ENCODE measurements at regions of chrX and their contacts with region 1.

Region 1: GRCh38 chrX:39613482-39613921 is 484.3 kb downstream of the BCOR start:
- DNase-seq: peak; percentile 35
- H3K4me3 Mint-ChIP-seq: peak overlapping the region; percentile 78
- H3K27ac Mint-ChIP-seq: peak overlapping the region; percentile 95
- H3K4me1 Mint-ChIP-seq: peaks cover 29% of the 10 kb centered on the region
- H3K27me3 Mint-ChIP-seq: no peaks in the 10 kb centered on the region

Region 2: GRCh38 chrX:39491548-39492297 is 121.8 kb before region 1 on chrX:
- CTCF ChIA-PET with region 1: no interaction called
- POLR2A ChIA-PET with region 1: no interaction called
- intact Hi-C with region 1: loop called (anchors 5 kb)
- DNase-seq: peak; percentile 77
- H3K4me3 Mint-ChIP-seq: peak overlapping the region; percentile 34
- H3K27ac Mint-ChIP-seq: peak overlapping the region; percentile 83
- H3K4me1 Mint-ChIP-seq: peaks cover 50% of the 10 kb centered on the region
- H3K27me3 Mint-ChIP-seq: no peaks in the 10 kb centered on the region

Region 3: DNA sequence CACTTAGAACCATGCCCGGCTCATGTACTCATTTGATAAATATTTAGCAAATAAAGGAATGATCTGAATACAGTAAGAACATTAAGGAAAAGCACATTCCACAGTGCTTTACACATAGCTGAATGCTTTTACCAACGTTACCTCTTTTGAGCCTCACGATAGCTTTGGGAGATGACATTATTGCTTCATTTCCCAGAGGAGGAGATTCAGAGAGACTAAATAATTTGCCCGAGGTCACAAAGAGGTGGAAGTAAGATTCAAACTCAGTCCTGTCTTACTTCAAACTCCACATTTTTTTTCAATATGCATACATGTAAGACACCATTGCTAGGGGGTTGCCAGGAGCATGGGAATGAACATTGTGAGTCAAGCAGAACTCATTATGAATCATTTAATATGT is 54.3 kb before region 1 on chrX:
- CTCF ChIA-PET with region 1: no interaction called
- POLR2A ChIA-PET with region 1: no interaction called
- intact Hi-C with region 1: no loop called
- DNase-seq: no peak
- H3K4me3 Mint-ChIP-seq: no peak overlapping the region
- H3K27ac Mint-ChIP-seq: no peak overlapping the region
- H3K4me1 Mint-ChIP-seq: no peaks in the 10 kb centered on the region
- H3K27me3 Mint-ChIP-seq: no peaks in the 10 kb centered on the region

Region 4: DNA sequence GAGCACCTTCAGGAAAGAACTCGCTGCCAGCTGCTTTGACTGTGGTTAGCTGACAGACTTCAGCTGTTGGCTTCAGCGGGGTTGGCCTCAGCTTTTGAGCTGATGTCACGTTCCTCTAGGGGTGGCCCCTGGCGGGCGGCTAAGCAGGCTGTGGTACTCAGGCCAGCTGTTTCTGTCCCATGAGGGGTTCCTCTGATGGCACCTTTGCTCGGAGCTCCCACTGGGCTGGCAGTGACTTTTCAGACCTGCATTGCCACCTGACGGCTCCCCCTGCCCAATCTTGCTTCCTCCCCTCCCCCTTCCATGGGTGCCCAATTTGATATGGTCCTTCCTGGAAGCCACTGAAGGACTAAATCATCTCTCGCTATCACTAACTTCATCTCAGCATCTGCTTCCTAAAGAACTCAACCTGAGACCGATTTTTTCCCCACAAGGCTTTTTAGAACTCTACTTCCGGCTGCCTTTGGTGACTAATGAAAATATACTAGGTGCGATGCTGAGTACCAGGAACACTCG is 35.1 kb before region 1 on chrX:
- CTCF ChIA-PET with region 1: no interaction called
- POLR2A ChIA-PET with region 1: interaction called, 8 read pairs
- intact Hi-C with region 1: loop called (anchors 1 kb)
- DNase-seq: peak; percentile 84
- H3K4me3 Mint-ChIP-seq: peak overlapping the region; percentile 16
- H3K27ac Mint-ChIP-seq: peak overlapping the region; percentile 91
- H3K4me1 Mint-ChIP-seq: peaks cover 23% of the 10 kb centered on the region
- H3K27me3 Mint-ChIP-seq: no peaks in the 10 kb centered on the region

Region 5: DNA sequence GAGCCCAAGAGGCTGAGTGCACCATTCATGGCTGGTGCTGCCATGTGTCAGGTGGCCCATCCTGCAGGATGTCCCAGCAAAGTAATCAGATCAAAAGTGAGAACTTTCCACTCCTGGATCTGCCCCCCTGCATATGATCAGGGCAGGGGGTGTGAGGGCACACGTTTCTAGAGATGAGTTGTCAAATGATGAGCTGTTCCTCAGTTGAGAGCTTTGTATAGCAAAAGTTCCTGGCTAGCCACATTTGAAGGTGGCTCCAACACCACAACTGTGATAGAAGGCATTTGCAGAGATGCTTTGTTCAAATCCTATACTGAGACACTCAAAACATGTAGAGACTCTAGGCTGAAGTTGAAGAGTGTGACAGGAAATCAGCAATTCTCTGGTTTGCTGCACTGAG is 17.5 kb before region 1 on chrX:
- CTCF ChIA-PET with region 1: interaction called, 3 read pairs
- POLR2A ChIA-PET with region 1: interaction called, 4 read pairs
- intact Hi-C with region 1: loop called (anchors 1 kb)
- DNase-seq: peak; percentile 35
- H3K4me3 Mint-ChIP-seq: no peak overlapping the region
- H3K27ac Mint-ChIP-seq: no peak overlapping the region
- H3K4me1 Mint-ChIP-seq: peaks cover 11% of the 10 kb centered on the region
- H3K27me3 Mint-ChIP-seq: no peaks in the 10 kb centered on the region

Measured in activated CD4-positive, alpha-beta memory T cell treated with anti-CD3 and anti-CD28 coated beads for 36 hours (primary cell).